PC-9 (cell line): ENCODE measurements at regions of chr7 and their contacts with region 1.

Region 1: GRCh38 chr7:97104719-97105238 is 12.7 kb upstream of the SDHAF3 start:
- DNase-seq: peak; percentile 44 to 83
- H3K4me3 ChIP-seq: no peak overlapping the region
- H3K27ac ChIP-seq: no peak overlapping the region
- H3K4me1 ChIP-seq: 0 out of 2 replicates have a peak, but pooled peaks cover 4% of the 10 kb centered on the region
- H3K27me3 ChIP-seq: no peaks in the 10 kb centered on the region; the same call in 1 of the 2 replicates
- CTCF ChIP-seq: peak; percentile 78

Region 2: GRCh38 chr7:97130417-97131139 is 25.8 kb after region 1 on chr7:
- CTCF ChIA-PET with region 1: no interaction called
- POLR2A ChIA-PET with region 1: no interaction called
- intact Hi-C with region 1: no loop called
- DNase-seq: no peak
- H3K4me3 ChIP-seq: no peak overlapping the region
- H3K27ac ChIP-seq: no peak overlapping the region
- H3K4me1 ChIP-seq: no peaks in the 10 kb centered on the region
- H3K27me3 ChIP-seq: no peaks in the 10 kb centered on the region
- CTCF ChIP-seq: no peak

Region 3: GRCh38 chr7:97179454-97180104 is 74.8 kb after region 1 on chr7:
- CTCF ChIA-PET with region 1: no interaction called
- POLR2A ChIA-PET with region 1: no interaction called
- intact Hi-C with region 1: loop called (anchors 1 kb)
- DNase-seq: peak in 1 of 2 experiments; percentile 27
- H3K4me3 ChIP-seq: no peak overlapping the region
- H3K27ac ChIP-seq: no peak overlapping the region
- H3K4me1 ChIP-seq: no peaks in the 10 kb centered on the region
- H3K27me3 ChIP-seq: no peaks in the 10 kb centered on the region
- CTCF ChIP-seq: peak; percentile 80

Region 4: DNA sequence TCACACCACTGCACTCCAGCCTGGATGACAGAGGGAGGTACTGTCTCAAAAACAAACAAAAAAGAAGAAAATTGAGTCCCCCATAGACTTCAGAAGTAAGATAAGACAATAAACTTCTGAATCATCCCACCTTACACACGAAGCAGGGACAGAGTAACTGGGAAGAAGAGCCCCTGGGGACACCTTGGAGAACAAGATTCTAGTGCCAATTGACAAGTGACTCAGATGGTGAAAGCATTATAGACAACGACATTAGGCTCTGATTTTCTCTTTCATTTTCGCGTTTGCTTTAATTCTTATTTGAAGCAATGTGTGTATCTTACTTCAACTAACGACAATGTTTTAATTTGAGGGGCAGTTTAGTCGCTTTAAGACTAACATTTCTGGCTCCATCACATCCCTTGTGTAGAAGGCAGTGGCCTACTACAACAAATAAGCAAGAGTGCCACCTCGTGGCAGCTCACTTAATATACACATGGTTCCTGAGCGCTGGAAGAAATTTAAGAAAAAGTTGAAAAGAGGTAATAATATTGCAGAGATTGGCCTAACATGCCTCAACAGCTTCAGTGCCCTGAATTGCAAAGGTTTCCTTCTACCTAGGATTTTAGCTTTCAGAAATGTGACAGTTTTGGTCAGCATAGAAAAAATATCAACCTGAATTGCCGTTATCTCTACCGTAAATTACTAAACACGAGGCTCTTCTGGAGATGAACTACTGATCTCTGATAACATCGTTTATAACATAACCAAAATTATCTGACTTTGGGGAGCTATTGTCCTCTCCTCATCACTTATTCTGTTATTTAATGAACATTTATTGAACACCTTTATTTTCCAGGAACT is 730.7 kb after region 1 on chr7:
- CTCF ChIA-PET with region 1: no interaction called
- POLR2A ChIA-PET with region 1: no interaction called
- intact Hi-C with region 1: loop called (anchors 2 kb)
- DNase-seq: peak; percentile 42 to 51
- H3K4me3 ChIP-seq: no peak overlapping the region
- H3K27ac ChIP-seq: no peak overlapping the region
- H3K4me1 ChIP-seq: no peaks in the 10 kb centered on the region
- H3K27me3 ChIP-seq: peaks cover 42% of the 10 kb centered on the region
- CTCF ChIP-seq: peak; percentile 83

Region 5: GRCh38 chr7:97845622-97846203 is 740.9 kb after region 1 on chr7:
- CTCF ChIA-PET with region 1: no interaction called
- POLR2A ChIA-PET with region 1: no interaction called
- intact Hi-C with region 1: loop called (anchors 1 kb)
- DNase-seq: no peak
- H3K4me3 ChIP-seq: no peak overlapping the region
- H3K27ac ChIP-seq: no peak overlapping the region
- H3K4me1 ChIP-seq: no peaks in the 10 kb centered on the region
- H3K27me3 ChIP-seq: peaks cover 7% of the 10 kb centered on the region
- CTCF ChIP-seq: peak; percentile 75

Region 6: DNA sequence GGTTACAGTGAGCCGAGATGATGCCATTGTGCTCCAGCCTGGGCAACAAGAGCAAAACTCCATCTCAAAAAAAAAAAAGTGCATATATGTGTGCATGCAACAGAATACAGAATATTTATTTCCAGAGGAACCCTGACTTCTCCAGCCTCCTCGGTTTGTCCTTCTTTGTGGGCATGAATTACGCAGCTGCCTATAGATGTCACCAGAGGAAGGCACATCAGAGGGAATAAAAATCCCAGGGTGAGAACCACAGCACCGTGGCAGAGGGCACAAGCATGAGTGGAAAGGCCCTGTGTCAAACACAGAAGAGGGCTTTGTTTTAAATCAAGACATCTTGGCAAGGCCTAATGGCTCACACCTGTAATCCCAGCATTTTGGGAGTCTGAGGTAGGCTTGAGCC is 909.6 kb after region 1 on chr7:
- CTCF ChIA-PET with region 1: no interaction called
- POLR2A ChIA-PET with region 1: no interaction called
- intact Hi-C with region 1: loop called (anchors 1 kb)
- DNase-seq: no peak
- H3K4me3 ChIP-seq: no peak overlapping the region
- H3K27ac ChIP-seq: no peak overlapping the region
- H3K4me1 ChIP-seq: no peaks in the 10 kb centered on the region
- H3K27me3 ChIP-seq: no peaks in the 10 kb centered on the region
- CTCF ChIP-seq: no peak